Posterior cingulate gyrus (tissue), 11 donors: ENCODE measurements at regions of chr1 and their contacts with region 1.

Region 1: GRCh38 chr1:39196244-39197215 is 8.0 kb upstream of the MACF1 start:
- DNase-seq: no peak

Region 2: GRCh38 chr1:38898653-38899230 is 297.8 kb before region 1 on chr1:
- intact Hi-C with region 1: no loop called
- DNase-seq: no peak

Region 3: GRCh38 chr1:39337067-39337466 is 140.5 kb after region 1 on chr1:
- intact Hi-C with region 1: no loop called
- DNase-seq: no peak

Region 4: DNA sequence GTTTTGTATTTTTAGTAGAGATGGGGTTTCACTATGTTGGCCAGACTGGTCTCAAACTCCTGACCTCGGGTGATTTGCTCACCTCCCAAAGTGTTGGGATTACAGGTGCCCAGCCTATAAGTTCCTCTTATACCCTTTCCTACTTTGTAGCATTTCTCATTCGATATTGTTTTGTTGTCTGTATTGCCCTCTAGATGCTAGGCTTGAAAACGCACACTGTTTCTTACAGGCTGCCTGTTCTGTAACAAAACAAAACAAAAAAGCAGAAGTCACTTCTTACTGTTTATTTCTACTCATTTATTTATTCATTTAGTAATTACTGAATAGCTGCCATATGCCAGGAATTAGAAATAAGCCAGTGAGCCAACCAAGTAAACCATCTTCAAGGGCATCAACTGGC is 158.0 kb after region 1 on chr1:
- intact Hi-C with region 1: loop called (anchors 10 kb)
- DNase-seq: no peak